Thyroid gland (tissue), 4 donors: ENCODE measurements at regions of chr20 and their contacts with region 1.

Region 1: GRCh38 chr20:50194831-50195755 is 4.5 kb downstream of the CEBPB start:
- DNase-seq: peak in 1 of 2 donors; percentile 20
- H3K4me3 ChIP-seq: no peak overlapping the region
- H3K27ac ChIP-seq: peak overlapping the region; percentile 98 to 99 (median 99)
- H3K4me1 ChIP-seq: peaks cover 26 to 34% of the 10 kb centered on the region in 2 donors
- H3K27me3 ChIP-seq: no peaks in the 10 kb centered on the region
- CTCF ChIP-seq: no peak
- POLR2A ChIP-seq: no peak

Region 2: GRCh38 chr20:50138479-50139393 is 56.4 kb before region 1 on chr20:
- intact Hi-C with region 1: no loop called
- DNase-seq: no peak
- H3K4me3 ChIP-seq: no peak overlapping the region
- H3K27ac ChIP-seq: peak overlapping the region; percentile 5 to 61 (median 54)
- H3K4me1 ChIP-seq: peaks cover 12 to 37% of the 10 kb centered on the region in 2 donors
- H3K27me3 ChIP-seq: no peaks in the 10 kb centered on the region
- CTCF ChIP-seq: no peak
- POLR2A ChIP-seq: no peak

Region 3: GRCh38 chr20:50283922-50284599 is 89.0 kb after region 1 on chr20:
- intact Hi-C with region 1: loop called (anchors 5 kb)
- DNase-seq: peak; percentile 80 to 87
- H3K4me3 ChIP-seq: no peak overlapping the region
- H3K27ac ChIP-seq: peak overlapping the region; percentile 90 to 100 (median 98)
- H3K4me1 ChIP-seq: peaks cover 48 to 55% of the 10 kb centered on the region in 2 donors
- H3K27me3 ChIP-seq: no peaks in the 10 kb centered on the region
- CTCF ChIP-seq: no peak
- POLR2A ChIP-seq: peak in 1 of 2 donors; percentile 80